CD4-positive, alpha-beta memory T cell (primary cell): ENCODE measurements at regions of chr1 and their contacts with region 1.

Region 1: GRCh38 chr1:78126506-78126905 is 80.7 kb downstream of the GIPC2 start:
- DNase-seq: no peak
- H3K4me3 ChIP-seq: no peak overlapping the region
- H3K4me3 Mint-ChIP-seq: no peak overlapping the region
- H3K27ac ChIP-seq: no peak overlapping the region
- H3K27ac Mint-ChIP-seq: no peak overlapping the region
- H3K4me1 ChIP-seq: no peaks in the 10 kb centered on the region
- H3K4me1 Mint-ChIP-seq: no peaks in the 10 kb centered on the region
- H3K27me3 ChIP-seq: no peaks in the 10 kb centered on the region
- H3K27me3 Mint-ChIP-seq: no peaks in the 10 kb centered on the region

Region 2: GRCh38 chr1:78607334-78607927 is 480.9 kb after region 1 on chr1:
- CTCF ChIA-PET with region 1: interaction called, 3 read pairs
- POLR2A ChIA-PET with region 1: no interaction called
- intact Hi-C with region 1: loop called (anchors 1 kb)
- DNase-seq: no peak
- H3K4me3 ChIP-seq: no peak overlapping the region
- H3K4me3 Mint-ChIP-seq: peak overlapping the region in 1 of 8 donors; percentile 26
- H3K27ac ChIP-seq: no peak overlapping the region
- H3K27ac Mint-ChIP-seq: no peak overlapping the region
- H3K4me1 ChIP-seq: no peaks in the 10 kb centered on the region
- H3K4me1 Mint-ChIP-seq: no peaks in the 10 kb centered on the region
- H3K27me3 ChIP-seq: no peaks in the 10 kb centered on the region
- H3K27me3 Mint-ChIP-seq: peaks cover 1 to 8% of the 10 kb centered on the region in 2 donors